Naive thymus-derived CD8-positive, alpha-beta T cell (primary cell): ENCODE measurements at regions of chr1 and their contacts with region 1.

Region 1: GRCh38 chr1:203273206-203273868 is 32.0 kb upstream of the BTG2 start:
- DNase-seq: peak; percentile 79 to 95 (median 91)
- ATAC-seq: peak; percentile 65 to 69
- H3K4me3 Mint-ChIP-seq: peak overlapping the region; percentile 70 to 87 (median 78)
- H3K27ac Mint-ChIP-seq: peak overlapping the region; percentile 75 to 94 (median 92)
- H3K4me1 Mint-ChIP-seq: peaks cover 13 to 72% (median 55%) of the 10 kb centered on the region in 4 donors
- H3K27me3 Mint-ChIP-seq: no peaks in the 10 kb centered on the region

Region 2: GRCh38 chr1:203290261-203291089 is 17.1 kb after region 1 on chr1:
- POLR2A ChIA-PET with region 1: interaction called, 188 read pairs
- DNase-seq: peak; percentile 91 to 99 (median 97)
- ATAC-seq: peak; percentile 57 to 68
- H3K4me3 Mint-ChIP-seq: peak overlapping the region; percentile 69 to 90 (median 84)
- H3K27ac Mint-ChIP-seq: peak overlapping the region; percentile 97 to 100 (median 99)
- H3K4me1 Mint-ChIP-seq: peaks cover 45 to 91% (median 85%) of the 10 kb centered on the region in 4 donors
- H3K27me3 Mint-ChIP-seq: no peaks in the 10 kb centered on the region

Region 3: DNA sequence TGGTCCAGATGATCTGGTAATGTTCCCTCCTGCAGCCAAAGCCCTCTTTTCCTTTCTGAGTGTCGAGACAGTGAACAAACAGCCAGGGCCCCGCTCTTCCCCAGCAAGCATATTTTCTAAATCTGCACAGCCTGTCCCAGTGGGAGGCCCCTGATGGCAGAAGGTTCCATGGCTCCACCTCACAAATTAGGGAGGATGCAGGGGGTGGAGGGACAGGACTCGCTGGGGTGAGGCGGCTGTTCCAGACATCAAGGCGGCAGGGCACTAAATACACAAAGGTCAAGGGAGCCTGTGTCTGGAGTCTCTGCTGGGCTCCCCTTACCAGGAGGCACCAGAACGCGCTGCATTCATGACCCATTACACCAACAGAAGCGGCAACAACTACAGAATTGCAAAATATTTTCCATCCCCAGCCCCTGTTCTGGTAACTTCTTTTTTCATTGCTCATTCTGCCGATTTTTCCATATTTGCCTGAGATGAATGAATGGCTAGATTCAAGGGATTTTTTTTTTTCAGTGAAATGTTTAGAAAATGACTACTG is 175.3 kb after region 1 on chr1:
- POLR2A ChIA-PET with region 1: no interaction called
- DNase-seq: no peak
- ATAC-seq: no peak
- H3K4me3 Mint-ChIP-seq: no peak overlapping the region
- H3K27ac Mint-ChIP-seq: peak overlapping the region in 1 of 10 donors; percentile 54
- H3K4me1 Mint-ChIP-seq: no peaks in the 10 kb centered on the region
- H3K27me3 Mint-ChIP-seq: peaks cover 14 to 27% (median 21%) of the 10 kb centered on the region in 5 donors